Cardiac septum (tissue), 1 donor: ENCODE measurements at regions of chr2 and their contacts with region 1.

Region 1: DNA sequence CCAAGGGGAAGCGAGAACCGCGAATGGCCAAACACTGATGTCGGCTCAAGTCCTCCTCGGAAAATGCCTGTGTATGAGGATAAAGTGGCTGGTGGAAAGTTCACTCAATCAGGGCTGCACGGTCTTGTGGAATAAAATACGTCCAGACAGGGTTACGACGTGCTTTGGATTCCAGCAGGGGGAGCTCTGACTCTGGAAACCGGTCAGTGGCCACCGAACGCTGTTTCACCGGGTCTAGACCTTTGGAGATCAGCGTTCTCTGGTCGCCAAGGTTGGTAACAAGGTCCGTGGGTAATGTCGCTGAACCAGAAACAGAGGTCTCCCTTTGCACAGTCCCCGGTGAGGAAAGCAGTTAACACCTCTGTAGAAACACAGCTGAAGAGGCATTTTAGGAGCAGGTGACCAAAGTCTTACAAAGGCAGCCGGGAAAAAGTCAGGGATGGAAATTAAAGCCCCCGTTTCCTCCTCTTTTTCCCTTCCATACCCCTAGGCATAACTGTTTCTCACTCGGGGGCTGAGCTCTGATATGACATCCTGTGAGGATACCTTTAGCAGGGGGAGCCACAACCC is 47.8 kb downstream of the CDCA7 start:
- DNase-seq: peak; percentile 85

Region 2: DNA sequence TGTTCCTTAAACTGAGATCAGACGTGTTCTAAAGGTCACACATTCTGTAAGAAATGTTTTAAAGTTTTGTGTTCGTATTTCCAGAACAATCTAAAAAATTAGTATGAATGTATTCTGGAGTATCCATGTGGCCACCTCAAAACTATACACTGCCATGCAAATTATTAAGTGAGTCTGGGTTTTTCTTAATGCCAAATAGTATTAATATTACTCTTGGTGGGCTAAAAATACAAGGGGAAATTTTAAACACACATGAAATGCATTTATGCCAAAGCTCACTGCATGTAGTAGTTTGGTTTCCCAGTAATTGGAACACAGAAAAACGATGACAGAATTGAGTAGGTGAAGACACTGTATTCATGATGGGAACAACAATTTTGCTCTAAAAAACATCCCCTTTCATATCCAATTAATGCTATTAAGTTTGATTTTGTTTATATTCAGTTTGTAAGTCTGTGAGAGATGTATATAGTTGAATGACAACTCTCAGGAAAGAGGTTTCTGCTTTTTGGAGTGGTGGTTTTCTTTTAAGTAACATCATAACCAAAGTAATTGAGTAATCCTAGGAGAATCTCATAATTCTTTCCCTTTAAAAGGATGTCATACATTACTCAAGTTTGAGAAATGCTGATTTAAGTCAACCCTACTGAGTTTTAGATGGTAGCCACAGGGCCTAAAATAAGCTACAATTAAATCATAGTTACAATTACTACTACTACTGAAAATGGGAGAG is 123.5 kb before region 1 on chr2:
- intact Hi-C with region 1: no loop called
- DNase-seq: no peak

Region 3: DNA sequence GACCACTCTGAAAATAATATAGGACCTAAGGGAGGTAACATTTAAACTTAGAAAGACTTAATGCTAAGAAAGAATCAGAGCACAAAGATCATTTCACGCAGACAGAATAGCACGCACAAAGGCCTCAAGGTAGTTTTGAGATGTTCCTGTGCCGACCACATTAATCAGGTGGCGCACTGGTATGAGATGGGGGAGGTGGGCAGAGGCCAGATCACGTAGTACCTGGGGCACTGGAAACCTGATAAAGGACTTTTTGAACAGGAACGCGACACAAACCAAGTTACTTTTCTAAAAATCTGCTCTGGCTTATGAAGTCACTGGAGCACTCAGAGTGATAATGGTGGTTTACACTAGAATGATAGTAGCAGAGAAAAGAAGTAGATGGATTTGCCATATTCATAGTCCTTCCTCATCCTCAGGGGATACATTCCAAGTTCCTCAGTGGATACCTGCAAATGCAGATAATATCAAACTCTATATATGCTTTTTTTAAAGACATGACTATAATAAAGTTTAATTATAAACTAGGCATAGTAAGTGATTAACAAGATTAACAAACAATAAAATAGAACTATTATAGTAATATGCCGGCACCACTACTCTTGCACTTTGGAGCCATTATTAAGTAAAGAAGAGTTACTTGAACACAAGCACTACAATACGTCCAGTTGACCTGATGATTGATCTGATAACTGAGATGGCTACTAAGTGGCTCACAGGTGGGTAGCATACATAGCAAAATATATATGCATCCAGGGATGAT is 90.5 kb before region 1 on chr2:
- intact Hi-C with region 1: no loop called
- DNase-seq: no peak

Region 4: GRCh38 chr2:173436088-173436487 is 33.6 kb after region 1 on chr2:
- intact Hi-C with region 1: no loop called
- DNase-seq: no peak

Region 5: GRCh38 chr2:173448938-173449471 is 46.5 kb after region 1 on chr2:
- intact Hi-C with region 1: loop called (anchors 1 kb)
- DNase-seq: peak; percentile 88